ENCODE measurements at regions of chr1 and their contacts with region 1.

Region 1: GRCh38 chr1:169207797-169208520 is 101.5 kb downstream of the ATP1B1 start:
- DNase-seq: no peak
- H3K4me3 ChIP-seq: no peak overlapping the region
- H3K27ac ChIP-seq: peak overlapping the region in 3 of 4 donors; percentile 7 to 77 (median 60)
- H3K4me1 ChIP-seq: peaks cover 0 to 31% (median 17%) of the 10 kb centered on the region in 4 donors
- H3K27me3 ChIP-seq: no peaks in the 10 kb centered on the region
- CTCF ChIP-seq: no peak
- EP300 ChIP-seq: peak in 3 of 4 donors; percentile 56 to 80 (median 70)
- POLR2A ChIP-seq: no peak

Region 2: GRCh38 chr1:169161496-169162194 is 46.3 kb before region 1 on chr1:
- intact Hi-C with region 1: loop called (anchors 5 kb)
- DNase-seq: peak; percentile 67
- H3K4me3 ChIP-seq: no peak overlapping the region
- H3K27ac ChIP-seq: peak overlapping the region; percentile 70 to 82 (median 75)
- H3K4me1 ChIP-seq: peaks cover 0 to 43% (median 23%) of the 10 kb centered on the region in 4 donors
- H3K27me3 ChIP-seq: no peaks in the 10 kb centered on the region
- CTCF ChIP-seq: no peak
- EP300 ChIP-seq: no peak
- POLR2A ChIP-seq: no peak